Posterior vena cava (tissue), 2 donors: ENCODE measurements at regions of chr17 and their contacts with region 1.

Region 1: GRCh38 chr17:933312-934083 is 46.1 kb downstream of the NXN start:
- DNase-seq: no peak

Region 2: DNA sequence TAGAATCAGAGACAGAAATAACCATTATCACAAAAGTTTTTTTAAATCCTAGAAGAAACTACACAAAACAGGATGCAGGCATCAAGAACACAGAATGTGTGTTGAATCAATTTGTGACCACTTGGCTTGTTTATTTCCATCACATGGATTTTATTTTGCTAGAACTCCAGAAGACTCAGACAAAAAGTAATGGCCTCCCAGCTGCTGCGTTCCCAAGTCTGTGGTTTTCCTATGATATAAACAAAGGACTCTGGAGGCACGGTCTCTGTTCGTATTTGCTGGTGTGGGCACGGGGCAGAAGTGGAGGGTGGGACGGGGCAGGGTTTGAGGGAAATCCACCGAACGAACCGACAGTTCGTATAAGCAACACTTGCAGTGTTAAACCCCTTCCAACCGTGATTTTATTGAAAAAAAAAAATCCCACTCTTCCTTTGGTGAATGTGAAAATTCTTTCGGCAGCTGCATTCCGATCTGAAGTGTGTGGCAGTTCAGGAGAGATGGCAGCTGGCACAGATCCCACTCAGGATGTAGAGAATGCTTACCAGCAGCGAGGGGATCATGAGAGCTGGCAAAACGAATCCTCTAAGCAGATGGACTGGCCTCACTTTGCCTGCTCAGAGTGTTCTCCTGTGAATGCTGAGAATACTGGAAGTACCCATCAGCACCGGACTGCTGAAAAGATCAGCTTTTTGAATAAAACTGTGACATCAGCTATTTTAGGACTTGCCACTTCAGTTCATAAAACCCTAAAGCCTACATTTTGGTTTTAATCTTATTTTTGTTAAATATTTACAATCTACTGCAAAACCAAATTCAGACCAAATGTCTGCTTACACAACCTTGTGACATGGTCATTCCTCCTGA is 384.1 kb before region 1 on chr17:
- intact Hi-C with region 1: loop called in 1 of 2 experiments (anchors 5 kb)
- DNase-seq: no peak

Region 3: DNA sequence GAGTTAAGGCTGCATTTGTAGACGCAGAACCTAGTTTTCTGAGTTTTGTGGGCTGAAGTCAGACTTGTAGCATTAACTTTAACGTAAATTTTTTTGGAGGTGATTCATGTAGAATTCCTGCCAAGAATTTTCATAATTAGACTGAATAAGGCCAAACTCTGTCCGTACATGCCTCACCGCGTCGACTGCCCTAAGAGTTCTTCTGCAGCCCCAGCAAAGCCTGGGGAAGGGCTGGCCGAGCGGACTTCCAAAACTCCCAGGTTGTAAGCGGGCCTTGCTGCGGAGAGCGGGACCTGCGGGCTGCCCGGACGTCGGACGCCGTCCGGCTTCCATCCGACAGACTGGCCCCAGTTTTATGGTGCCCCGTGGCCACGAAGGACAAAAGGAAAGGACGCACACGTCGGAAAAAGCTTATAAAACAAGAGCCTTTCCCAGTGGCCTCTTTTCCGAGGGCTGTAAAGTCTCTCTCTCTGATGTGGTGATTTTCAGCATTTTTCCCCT is 29.5 kb before region 1 on chr17:
- intact Hi-C with region 1: loop called in 1 of 2 experiments (anchors 5 kb)
- DNase-seq: no peak